ENCODE measurements at regions of chr12 and their contacts with region 1.

Region 1: DNA sequence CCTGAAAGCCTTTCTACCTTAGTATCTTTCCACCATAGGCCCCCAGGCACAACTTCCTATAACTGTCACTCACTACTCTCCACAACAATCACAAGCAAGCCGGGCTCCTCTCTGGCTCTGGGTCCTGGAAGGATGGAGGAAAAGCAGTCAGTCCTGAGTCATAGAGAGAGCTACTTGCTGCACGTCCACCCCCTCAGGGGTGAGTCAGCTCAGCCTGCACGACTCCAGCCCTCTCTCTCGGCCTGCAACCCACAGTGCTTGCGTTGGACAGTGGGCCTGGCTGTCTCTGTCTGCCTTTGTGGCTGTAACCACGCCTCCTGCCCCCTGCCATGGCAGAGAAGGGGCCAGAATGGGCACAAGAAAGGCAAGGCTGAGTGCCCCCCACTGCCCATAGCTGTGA is 154.1 kb upstream of the FKBP4 start:
- DNase-seq: peak; percentile 91
- H3K4me3 ChIP-seq: no peak overlapping the region
- H3K27ac ChIP-seq: peak overlapping the region; percentile 10
- H3K4me1 ChIP-seq: peaks cover 17% of the 10 kb centered on the region
- H3K27me3 ChIP-seq: no peaks in the 10 kb centered on the region
- CTCF ChIP-seq: no peak

Region 2: GRCh38 chr12:2084553-2085296 is 556.0 kb before region 1 on chr12:
- CTCF ChIA-PET with region 1: no interaction called
- dilution Hi-C with region 1: no loop called
- in situ Hi-C with region 1: no loop called
- intact Hi-C with region 1: no loop called
- DNase-seq: no peak
- H3K4me3 ChIP-seq: no peak overlapping the region
- H3K27ac ChIP-seq: no peak overlapping the region
- H3K4me1 ChIP-seq: no peaks in the 10 kb centered on the region
- H3K27me3 ChIP-seq: no peaks in the 10 kb centered on the region
- CTCF ChIP-seq: no peak

Region 3: GRCh38 chr12:2338991-2339431 is 301.7 kb before region 1 on chr12:
- CTCF ChIA-PET with region 1: interaction called, 12 read pairs
- dilution Hi-C with region 1: no loop called
- in situ Hi-C with region 1: no loop called
- intact Hi-C with region 1: no loop called
- DNase-seq: peak; percentile 85
- H3K4me3 ChIP-seq: no peak overlapping the region
- H3K27ac ChIP-seq: peak overlapping the region; percentile 53
- H3K4me1 ChIP-seq: peaks cover 57% of the 10 kb centered on the region
- H3K27me3 ChIP-seq: no peaks in the 10 kb centered on the region
- CTCF ChIP-seq: no peak

Region 4: GRCh38 chr12:2613326-2614073 is 27.2 kb before region 1 on chr12:
- CTCF ChIA-PET with region 1: no interaction called
- dilution Hi-C with region 1: no loop called
- in situ Hi-C with region 1: no loop called
- intact Hi-C with region 1: loop called (anchors 1 kb)
- DNase-seq: peak; percentile 94
- H3K4me3 ChIP-seq: no peak overlapping the region
- H3K27ac ChIP-seq: no peak overlapping the region
- H3K4me1 ChIP-seq: peaks cover 8% of the 10 kb centered on the region
- H3K27me3 ChIP-seq: no peaks in the 10 kb centered on the region
- CTCF ChIP-seq: no peak

Region 5: DNA sequence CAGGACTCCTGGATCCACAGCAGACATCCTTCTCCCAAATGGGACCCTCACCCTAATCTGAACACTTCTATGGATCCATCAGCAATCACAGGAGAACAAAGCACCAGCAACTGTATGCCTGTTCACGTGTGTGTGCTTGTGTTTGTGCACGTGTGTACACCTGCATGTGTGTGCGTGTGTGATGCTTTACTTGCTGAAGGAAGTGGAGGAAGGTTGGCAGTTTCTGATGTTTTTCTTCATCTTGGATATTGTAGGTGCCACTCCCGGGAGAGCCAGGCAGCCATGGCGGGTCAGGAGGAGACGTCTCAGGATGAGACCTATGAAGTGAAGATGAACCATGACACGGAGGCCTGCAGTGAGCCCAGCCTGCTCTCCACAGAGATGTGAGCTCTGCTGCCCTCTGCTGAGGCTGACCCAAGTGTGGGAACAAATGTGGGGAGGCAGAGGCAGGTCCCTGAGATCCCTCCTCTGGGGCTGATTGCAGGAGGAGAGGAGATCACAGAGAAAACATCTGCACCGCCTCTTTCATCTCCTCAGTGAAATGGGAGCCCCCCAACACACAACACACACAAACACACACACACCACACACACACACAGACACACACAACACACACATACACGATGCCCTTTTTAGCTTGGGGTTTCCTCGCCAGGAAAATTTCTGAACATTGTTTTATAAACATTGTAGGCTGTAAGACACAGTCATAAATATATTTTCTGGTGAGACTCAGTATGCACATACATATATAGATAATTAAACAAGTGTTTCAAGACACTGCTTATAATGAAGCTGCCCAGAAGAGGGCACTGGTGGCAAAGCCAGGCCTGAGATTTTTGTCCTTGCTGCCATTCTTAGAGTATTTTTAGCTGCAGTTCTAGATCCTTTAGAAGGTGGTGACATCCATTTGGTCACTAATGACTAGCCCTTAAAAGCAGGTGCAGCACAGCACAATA is 41.9 kb after region 1 on chr12:
- CTCF ChIA-PET with region 1: no interaction called
- dilution Hi-C with region 1: no loop called
- in situ Hi-C with region 1: no loop called
- intact Hi-C with region 1: loop called (anchors 2 kb)
- DNase-seq: peak; percentile 15
- H3K4me3 ChIP-seq: no peak overlapping the region
- H3K27ac ChIP-seq: no peak overlapping the region
- H3K4me1 ChIP-seq: no peaks in the 10 kb centered on the region
- H3K27me3 ChIP-seq: no peaks in the 10 kb centered on the region
- CTCF ChIP-seq: peak; percentile 48 to 67

Region 6: DNA sequence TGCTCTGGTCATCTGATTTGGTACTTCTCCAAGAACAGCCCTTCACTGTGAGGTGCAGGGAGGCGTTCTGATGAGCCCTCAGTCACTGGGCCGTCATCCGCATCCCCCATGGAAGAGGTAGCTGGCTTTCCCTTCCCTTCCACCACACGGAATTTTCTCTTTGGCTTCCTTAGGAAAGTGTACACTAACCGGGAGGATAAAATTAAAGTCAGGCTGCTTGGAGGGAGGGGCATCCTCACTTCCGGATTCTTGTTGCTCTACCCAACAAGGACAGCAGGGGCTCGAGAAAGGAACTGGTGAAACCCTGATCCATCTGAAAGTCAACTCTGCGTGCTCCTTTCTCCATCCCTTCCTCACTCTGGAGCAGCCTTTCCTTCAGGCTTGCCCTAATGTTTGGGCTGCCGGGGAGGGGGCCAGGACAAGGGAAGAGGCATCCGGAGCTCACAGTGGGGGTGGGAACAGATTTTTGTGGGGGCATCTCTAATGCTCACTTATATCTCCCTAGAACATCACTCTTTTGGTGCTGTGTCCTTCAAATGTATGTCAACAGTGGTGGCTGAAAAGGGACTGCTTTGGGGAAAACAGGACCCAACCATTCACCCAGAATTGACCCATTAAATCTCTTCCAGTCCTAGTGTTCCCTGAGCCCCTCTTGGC is 52.6 kb after region 1 on chr12:
- CTCF ChIA-PET with region 1: no interaction called
- dilution Hi-C with region 1: no loop called
- in situ Hi-C with region 1: no loop called
- intact Hi-C with region 1: no loop called
- DNase-seq: no peak
- H3K4me3 ChIP-seq: no peak overlapping the region
- H3K27ac ChIP-seq: no peak overlapping the region
- H3K4me1 ChIP-seq: peaks cover 9% of the 10 kb centered on the region
- H3K27me3 ChIP-seq: peaks cover 4% of the 10 kb centered on the region
- CTCF ChIP-seq: no peak